ENCODE measurements at regions of chr2 and their contacts with region 1.

Region 1: DNA sequence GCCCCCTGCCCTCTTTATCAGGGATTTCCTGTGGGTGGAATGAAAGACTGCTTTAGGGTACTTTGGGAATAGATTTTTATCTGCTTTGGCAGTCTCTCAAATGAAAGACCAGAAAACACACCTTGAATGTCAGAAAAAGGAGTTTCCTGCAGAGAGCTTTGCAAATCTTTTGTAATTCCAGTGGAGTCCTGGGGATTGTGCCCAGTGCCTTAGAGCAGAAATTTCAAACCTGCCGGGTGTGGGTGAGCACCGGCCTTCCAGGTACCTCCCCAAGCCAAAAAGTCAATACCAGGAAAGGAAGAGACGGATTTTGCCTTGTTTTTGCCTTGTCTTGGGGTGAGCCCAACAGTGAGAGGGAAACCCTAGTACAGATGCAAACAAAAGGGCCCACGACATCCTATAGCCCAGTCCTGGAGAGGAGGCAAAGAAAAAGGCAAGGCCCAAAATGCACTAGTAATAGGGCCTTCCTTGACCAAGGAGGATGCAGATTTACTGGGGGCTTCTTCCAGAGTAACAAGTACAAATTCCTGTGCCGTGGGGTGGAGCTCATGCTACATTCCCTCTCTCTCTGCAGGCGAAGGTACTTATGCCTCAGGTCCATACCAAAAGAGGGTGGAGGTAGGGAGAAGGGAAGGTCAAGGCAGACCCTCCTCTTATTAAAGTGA is 36.3 kb downstream of the FOXI3 start:
- DNase-seq: no peak
- H3K4me3 Mint-ChIP-seq: no peak overlapping the region
- H3K27ac Mint-ChIP-seq: no peak overlapping the region
- H3K4me1 Mint-ChIP-seq: no peaks in the 10 kb centered on the region
- H3K27me3 Mint-ChIP-seq: peaks cover 8% of the 10 kb centered on the region
- CTCF ChIP-seq: no peak

Region 2: GRCh38 chr2:88481691-88482338 is 65.7 kb after region 1 on chr2:
- CTCF ChIA-PET with region 1: interaction called, 11 read pairs
- intact Hi-C with region 1: no loop called
- DNase-seq: peak; percentile 37
- H3K4me3 Mint-ChIP-seq: no peak overlapping the region
- H3K27ac Mint-ChIP-seq: peak overlapping the region; percentile 73
- H3K4me1 Mint-ChIP-seq: peaks cover 18% of the 10 kb centered on the region
- H3K27me3 Mint-ChIP-seq: no peaks in the 10 kb centered on the region
- CTCF ChIP-seq: no peak

Region 3: GRCh38 chr2:88492002-88492401 is 75.9 kb after region 1 on chr2:
- CTCF ChIA-PET with region 1: no interaction called
- intact Hi-C with region 1: no loop called
- DNase-seq: no peak
- H3K4me3 Mint-ChIP-seq: no peak overlapping the region
- H3K27ac Mint-ChIP-seq: no peak overlapping the region
- H3K4me1 Mint-ChIP-seq: no peaks in the 10 kb centered on the region
- H3K27me3 Mint-ChIP-seq: no peaks in the 10 kb centered on the region
- CTCF ChIP-seq: no peak

Region 4: DNA sequence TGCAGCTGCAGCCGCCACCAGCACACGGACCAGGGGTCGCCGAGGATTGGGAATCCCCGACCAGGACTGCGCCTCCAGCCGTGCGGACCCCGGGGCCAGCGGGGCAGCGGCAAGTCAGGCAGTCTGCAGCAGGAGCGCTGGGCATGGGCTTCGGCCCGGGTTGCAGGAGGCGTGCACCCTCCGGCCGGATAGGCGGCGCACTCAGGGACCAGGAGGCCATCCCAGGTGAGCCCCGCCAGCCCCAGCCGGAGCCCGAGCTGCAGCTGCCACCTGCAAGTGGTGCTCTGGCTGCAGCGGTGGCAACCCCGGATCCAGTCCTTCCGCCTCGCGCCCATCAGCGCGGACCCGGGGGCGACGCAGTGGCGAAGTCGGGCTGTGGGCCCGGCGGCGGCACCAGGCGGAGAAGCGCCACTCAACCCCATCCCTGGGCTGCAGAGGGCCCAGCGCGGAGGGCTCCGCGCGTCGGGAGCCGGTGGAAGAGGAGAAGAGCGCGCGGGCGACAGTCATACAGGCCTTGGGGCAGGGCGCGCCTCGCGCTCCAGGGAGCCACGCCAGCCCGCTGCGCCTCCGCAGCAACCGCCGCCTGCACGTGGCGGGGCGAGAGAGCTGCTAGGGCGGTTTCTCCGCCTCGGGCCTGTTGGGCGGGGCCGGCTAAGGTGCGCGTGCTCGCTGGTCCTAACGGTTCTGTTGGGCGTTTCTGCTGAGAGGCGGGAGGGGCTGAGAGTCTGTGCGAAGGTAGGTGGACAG is 349.2 kb after region 1 on chr2:
- CTCF ChIA-PET with region 1: no interaction called
- intact Hi-C with region 1: no loop called
- DNase-seq: peak; percentile 10
- H3K4me3 Mint-ChIP-seq: peak overlapping the region; percentile 47
- H3K27ac Mint-ChIP-seq: no peak overlapping the region
- H3K4me1 Mint-ChIP-seq: no peaks in the 10 kb centered on the region
- H3K27me3 Mint-ChIP-seq: no peaks in the 10 kb centered on the region
- CTCF ChIP-seq: no peak